ENCODE measurements at regions of chr3 and their contacts with region 1.

Region 1: DNA sequence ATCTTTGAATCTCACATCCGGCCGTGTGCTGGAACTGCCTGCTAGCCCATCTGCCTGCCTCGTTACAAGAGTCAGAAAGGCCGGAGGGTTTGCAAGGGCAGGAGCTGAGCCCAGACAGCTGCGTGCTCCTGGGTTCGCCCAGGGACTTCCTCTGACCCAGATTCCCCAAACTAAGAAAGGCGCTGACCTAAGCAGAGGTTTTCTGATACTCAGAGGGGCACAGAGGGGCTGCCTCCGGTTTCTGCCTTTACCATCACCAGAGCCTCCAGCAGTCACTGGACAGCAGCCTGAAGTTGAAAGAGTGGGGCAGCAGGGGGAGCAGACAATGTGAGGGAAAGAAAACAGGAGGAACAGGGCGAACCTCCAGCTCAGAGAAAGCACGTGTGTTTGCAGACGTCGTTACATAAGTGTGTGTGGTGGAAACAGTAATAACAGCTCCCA is 33.4 kb upstream of the RAD18 start:
- DNase-seq: no peak

Region 2: GRCh38 chr3:8183627-8184026 is 813.1 kb before region 1 on chr3:
- intact Hi-C with region 1: no loop called
- DNase-seq: no peak

Region 3: DNA sequence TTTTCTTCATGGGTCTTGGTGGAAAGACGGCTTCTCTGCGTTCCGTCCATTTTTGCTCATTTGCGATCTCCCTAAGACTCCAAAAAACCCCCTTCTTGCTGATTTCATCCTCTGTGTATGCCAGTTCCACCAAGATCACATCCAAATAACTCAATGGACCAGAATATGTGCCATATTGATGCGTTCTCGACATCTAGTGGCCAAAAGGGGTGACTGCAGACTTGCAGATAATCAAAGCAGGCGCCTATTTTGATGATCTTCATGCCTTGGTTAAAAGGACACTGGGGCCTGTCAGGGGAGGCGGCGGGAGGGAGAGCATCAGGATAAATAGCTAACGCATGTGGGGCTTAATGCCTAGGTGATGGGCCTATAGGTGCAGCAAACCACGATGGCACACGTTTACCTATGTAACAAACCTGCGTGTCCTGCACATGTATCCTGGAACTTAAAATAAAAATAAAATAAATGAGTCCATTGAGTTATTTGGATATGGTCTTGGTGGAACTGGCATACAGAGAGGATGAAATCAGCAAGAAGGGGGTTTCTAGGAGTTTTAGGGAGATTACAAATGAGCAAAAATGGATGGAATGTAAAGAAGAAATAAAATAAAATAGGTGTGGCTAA is 70.8 kb after region 1 on chr3:
- intact Hi-C with region 1: loop called (anchors 5 to 10 kb)
- DNase-seq: no peak